Activated T-helper 1 cell treated with anti-CD3 and anti-CD28 coated beads, Interleukin-12 subunit alpha, Interleukin-12 subunit beta, Interleukin-2, Interleukin-4 antibody, amounts not matched to agents 30 ng/mL and 10 ng/mL and 1 ng/mL, durations not matched to agents 14 hours and 24 hours and 36 hours (primary cell): ENCODE measurements at regions of chr2 and their contacts with region 1.

Region 1: DNA sequence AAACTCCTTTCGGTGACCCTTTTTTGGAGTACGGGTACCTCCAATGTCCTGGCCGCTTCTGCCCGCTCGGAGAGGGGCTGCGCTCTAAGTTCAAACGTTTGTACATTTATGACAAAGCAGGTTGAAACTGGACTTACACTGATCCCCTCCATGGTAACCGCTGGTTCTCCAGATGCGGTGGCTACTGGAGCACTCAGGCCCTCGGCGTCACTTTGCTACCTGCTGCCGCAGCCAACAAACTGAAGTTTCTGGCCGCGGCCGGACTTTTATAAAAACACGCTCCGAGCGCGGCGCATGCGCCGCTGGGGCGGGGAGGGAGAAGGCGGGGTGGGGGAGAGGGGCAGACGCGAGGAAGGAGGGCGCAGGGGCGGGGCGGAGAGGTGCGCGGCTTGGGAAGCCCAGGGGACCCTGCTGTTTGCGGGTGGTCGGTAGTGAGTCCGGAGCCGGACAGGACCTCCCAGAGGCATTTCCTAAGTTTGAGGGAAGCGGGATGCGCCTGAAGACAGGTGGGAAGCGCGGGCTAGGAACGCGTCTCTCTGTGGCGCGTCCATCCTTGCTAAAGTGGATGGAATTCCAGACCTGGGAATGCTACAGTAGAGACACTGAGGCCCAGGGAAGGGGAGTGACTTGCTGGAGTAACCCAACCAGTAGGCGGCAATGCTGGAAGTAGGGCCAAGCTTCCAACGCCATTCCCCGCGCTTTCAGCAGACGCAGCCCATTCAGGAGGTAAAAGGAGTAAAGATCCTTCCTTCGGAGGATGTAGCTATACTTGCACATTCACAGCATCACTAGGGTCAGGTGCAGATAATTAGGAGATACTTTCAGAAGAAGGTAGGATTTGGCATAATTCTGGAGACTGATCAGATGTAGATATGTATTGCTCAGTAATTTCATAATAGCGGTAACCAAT is at the start of gene CXCR4:
- DNase-seq: peak; percentile 85
- H3K4me3 Mint-ChIP-seq: peak within 1 kb of the TSS; percentile 97
- H3K27ac Mint-ChIP-seq: peak within 1 kb of the TSS; percentile 98
- H3K4me1 Mint-ChIP-seq: peaks cover 73% of the 10 kb centered on the region
- H3K27me3 Mint-ChIP-seq: peaks cover 31% of the 10 kb centered on the region
- total RNA-seq, gene CXCR4: 83.3 and 86.3 TPM in 2 replicates

Region 2: GRCh38 chr2:135531231-135532228 is 586.6 kb before region 1 on chr2 and contains the start of gene R3HDM1:
- intact Hi-C with region 1: loop called (anchors 2 kb)
- DNase-seq: peak; percentile 95
- H3K4me3 Mint-ChIP-seq: no peak within 1 kb of the TSS
- H3K27ac Mint-ChIP-seq: peak within 1 kb of the TSS; percentile 83
- H3K4me1 Mint-ChIP-seq: peaks cover 17% of the 10 kb centered on the region
- H3K27me3 Mint-ChIP-seq: no peaks in the 10 kb centered on the region
- total RNA-seq, gene R3HDM1: 63.0 and 64.0 TPM in 2 replicates

Region 3: DNA sequence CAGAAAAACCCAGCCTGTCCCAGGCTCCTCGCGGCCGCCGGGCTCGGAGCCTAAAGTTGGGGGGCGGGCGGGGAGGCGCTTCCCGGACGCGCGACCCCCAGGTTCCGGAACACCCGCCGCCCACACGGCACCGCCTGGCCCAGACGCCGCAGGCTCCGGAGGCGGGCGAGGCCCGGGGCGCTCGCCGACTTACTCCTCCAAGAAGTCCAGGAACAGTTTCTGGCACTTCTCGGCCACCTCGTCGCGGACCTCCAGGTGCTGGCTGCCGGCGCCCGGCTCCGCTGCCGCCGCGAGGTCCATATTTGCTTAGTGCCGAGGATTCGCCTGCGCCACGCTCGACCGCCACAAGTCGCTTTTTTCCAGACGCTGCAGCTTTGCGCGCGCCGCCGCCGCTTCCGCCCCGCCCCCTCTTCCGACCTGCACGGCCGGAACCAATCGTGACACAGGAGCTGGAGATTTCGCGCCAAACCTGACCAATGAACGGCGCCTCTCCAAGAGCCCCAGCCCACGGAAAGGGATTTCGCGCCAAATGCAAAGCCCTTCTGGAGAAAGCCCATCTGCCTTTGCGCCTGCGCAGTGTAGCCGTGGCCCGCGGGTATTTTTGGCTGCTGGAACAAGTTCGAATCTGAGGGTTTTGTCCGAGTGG is 242.0 kb before region 1 on chr2 and contains the start of gene MCM6:
- intact Hi-C with region 1: loop called (anchors 1 kb)
- DNase-seq: peak; percentile 99
- H3K4me3 Mint-ChIP-seq: peak within 1 kb of the TSS; percentile 98
- H3K27ac Mint-ChIP-seq: peak within 1 kb of the TSS; percentile 99
- H3K4me1 Mint-ChIP-seq: peaks cover 45% of the 10 kb centered on the region
- H3K27me3 Mint-ChIP-seq: peaks cover 2% of the 10 kb centered on the region
- total RNA-seq, gene MCM6: 176 and 177 TPM in 2 replicates

Region 4: GRCh38 chr2:135985018-135985825 is 132.9 kb before region 1 on chr2 and contains the start of gene DARS1:
- intact Hi-C with region 1: loop called (anchors 1 kb)
- DNase-seq: peak; percentile 78
- H3K4me3 Mint-ChIP-seq: peak within 1 kb of the TSS; percentile 91
- H3K27ac Mint-ChIP-seq: peak within 1 kb of the TSS; percentile 97
- H3K4me1 Mint-ChIP-seq: peaks cover 62% of the 10 kb centered on the region
- H3K27me3 Mint-ChIP-seq: no peaks in the 10 kb centered on the region
- total RNA-seq, gene DARS1: 132 and 140 TPM in 2 replicates

Region 5: GRCh38 chr2:136135921-136136906 is 18.1 kb after region 1 on chr2:
- intact Hi-C with region 1: loop called (anchors 1 kb)
- DNase-seq: peak; percentile 59
- H3K4me3 Mint-ChIP-seq: peak overlapping the region; percentile 17
- H3K27ac Mint-ChIP-seq: peak overlapping the region; percentile 60
- H3K4me1 Mint-ChIP-seq: peaks cover 82% of the 10 kb centered on the region
- H3K27me3 Mint-ChIP-seq: peaks cover 30% of the 10 kb centered on the region

Region 6: GRCh38 chr2:136327162-136327852 is 209.1 kb after region 1 on chr2:
- intact Hi-C with region 1: loop called (anchors 1 kb)
- DNase-seq: peak; percentile 69
- H3K4me3 Mint-ChIP-seq: peak overlapping the region; percentile 43
- H3K27ac Mint-ChIP-seq: peak overlapping the region; percentile 91
- H3K4me1 Mint-ChIP-seq: peaks cover 68% of the 10 kb centered on the region
- H3K27me3 Mint-ChIP-seq: peaks cover 4% of the 10 kb centered on the region